Dendritic cell treated with granulocyte-macrophage colony-stimulating factor and Interleukin-4, amounts not matched to agents 40 ng/mL and 50 ng/mL, for 4 days (primary cell): ENCODE measurements at regions of chr1 and their contacts with region 1.

Region 1: GRCh38 chr1:66396212-66396890 is 137.6 kb upstream of the SGIP1 start:
- H3K4me3 Mint-ChIP-seq: peak overlapping the region; percentile 10
- H3K27ac Mint-ChIP-seq: peak overlapping the region; percentile 65
- H3K4me1 Mint-ChIP-seq: peaks cover 75% of the 10 kb centered on the region
- H3K27me3 Mint-ChIP-seq: peaks cover 11% of the 10 kb centered on the region

Region 2: GRCh38 chr1:66380452-66381212 is 15.7 kb before region 1 on chr1:
- intact Hi-C with region 1: loop called (anchors 2 kb)
- H3K4me3 Mint-ChIP-seq: no peak overlapping the region
- H3K27ac Mint-ChIP-seq: peak overlapping the region; percentile 22
- H3K4me1 Mint-ChIP-seq: peaks cover 74% of the 10 kb centered on the region
- H3K27me3 Mint-ChIP-seq: peaks cover 21% of the 10 kb centered on the region